Thyroid gland (tissue), 4 donors: ENCODE measurements at regions of chr1 and their contacts with region 1.

Region 1: GRCh38 chr1:231421993-231422764 is at the start of gene EGLN1:
- DNase-seq: peak; percentile 89
- H3K4me3 ChIP-seq: peak within 1 kb of the TSS; percentile 58 to 87 (median 84)
- H3K27ac ChIP-seq: peak within 1 kb of the TSS; percentile 92 to 96 (median 94)
- H3K4me1 ChIP-seq: peaks cover 21 to 25% of the 10 kb centered on the region in 2 donors
- H3K27me3 ChIP-seq: no peaks in the 10 kb centered on the region
- CTCF ChIP-seq: peak in 3 of 6 experiments; percentile 9 to 26 (median 25)
- POLR2A ChIP-seq: peak in 1 of 2 donors; percentile 91
- total RNA-seq, gene EGLN1: 36.6 to 48.5 (median 42.2) TPM

Region 2: DNA sequence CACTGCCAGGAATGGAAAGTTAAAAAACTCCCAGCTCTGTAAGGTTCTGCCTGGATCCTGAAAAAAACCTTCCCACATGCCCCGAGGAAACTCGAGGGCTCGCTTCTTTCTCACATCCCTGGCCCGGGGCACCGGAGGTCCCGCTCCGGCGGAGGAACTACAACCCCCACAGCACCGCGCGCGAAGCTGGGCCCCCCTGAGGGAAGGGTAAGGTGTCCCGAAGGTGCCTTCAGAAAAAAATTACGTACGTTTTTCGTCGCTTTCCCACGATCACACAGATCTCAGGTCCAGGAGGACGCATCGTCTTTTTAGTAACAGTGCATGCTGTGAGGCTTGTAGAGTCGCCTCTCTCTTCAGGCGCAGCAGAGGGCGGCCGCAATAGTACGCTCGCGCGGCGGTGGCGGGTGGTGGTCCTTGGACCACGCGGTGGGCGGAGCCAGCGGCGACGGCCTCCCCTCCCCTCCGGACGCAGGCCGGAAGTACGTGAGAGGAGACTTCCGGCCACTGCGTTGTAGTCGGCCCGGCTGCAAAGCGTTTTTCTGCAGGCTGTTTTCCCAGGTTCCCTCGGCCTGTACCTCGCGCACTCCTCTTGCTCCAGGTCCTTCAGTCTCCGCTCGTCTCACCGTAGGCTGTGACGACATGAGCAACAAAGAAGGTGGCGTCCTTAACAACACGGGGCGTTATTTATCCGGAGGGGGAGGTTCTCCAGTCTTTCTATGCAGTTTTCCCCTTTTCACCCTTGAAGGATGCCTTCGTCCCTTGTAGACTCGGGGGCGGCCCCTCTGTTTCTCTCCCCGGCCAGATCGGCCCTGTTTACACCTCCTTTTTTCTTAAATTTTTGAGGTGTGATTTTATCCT is 106.2 kb after region 1 on chr1 and contains the start of gene TSNAX:
- intact Hi-C with region 1: loop called (anchors 2 kb)
- DNase-seq: peak; percentile 90
- H3K4me3 ChIP-seq: peak within 1 kb of the TSS; percentile 45 to 86 (median 51)
- H3K27ac ChIP-seq: peak within 1 kb of the TSS; percentile 86 to 97 (median 93)
- H3K4me1 ChIP-seq: peaks cover 11 to 13% of the 10 kb centered on the region in 2 donors
- H3K27me3 ChIP-seq: no peaks in the 10 kb centered on the region
- CTCF ChIP-seq: peak in 1 of 6 experiments; percentile 18
- POLR2A ChIP-seq: peak in 1 of 2 donors; percentile 90
- total RNA-seq, gene TSNAX: 32.0 to 43.7 (median 36.5) TPM

Region 3: GRCh38 chr1:231702801-231703395 is 280.7 kb after region 1 on chr1:
- intact Hi-C with region 1: no loop called
- DNase-seq: no peak
- H3K4me3 ChIP-seq: no peak overlapping the region
- H3K27ac ChIP-seq: no peak overlapping the region
- H3K4me1 ChIP-seq: no peaks in the 10 kb centered on the region
- H3K27me3 ChIP-seq: no peaks in the 10 kb centered on the region
- CTCF ChIP-seq: no peak
- POLR2A ChIP-seq: no peak

Region 4: GRCh38 chr1:231734417-231734816 is 312.2 kb after region 1 on chr1:
- intact Hi-C with region 1: no loop called
- DNase-seq: peak; percentile 9 to 28
- H3K4me3 ChIP-seq: no peak overlapping the region
- H3K27ac ChIP-seq: no peak overlapping the region
- H3K4me1 ChIP-seq: peaks cover 0 to 5% of the 10 kb centered on the region in 2 donors
- H3K27me3 ChIP-seq: no peaks in the 10 kb centered on the region
- CTCF ChIP-seq: no peak
- POLR2A ChIP-seq: no peak